BJ (cell line): ENCODE measurements at regions of chr15 and their contacts with region 1.

Region 1: DNA sequence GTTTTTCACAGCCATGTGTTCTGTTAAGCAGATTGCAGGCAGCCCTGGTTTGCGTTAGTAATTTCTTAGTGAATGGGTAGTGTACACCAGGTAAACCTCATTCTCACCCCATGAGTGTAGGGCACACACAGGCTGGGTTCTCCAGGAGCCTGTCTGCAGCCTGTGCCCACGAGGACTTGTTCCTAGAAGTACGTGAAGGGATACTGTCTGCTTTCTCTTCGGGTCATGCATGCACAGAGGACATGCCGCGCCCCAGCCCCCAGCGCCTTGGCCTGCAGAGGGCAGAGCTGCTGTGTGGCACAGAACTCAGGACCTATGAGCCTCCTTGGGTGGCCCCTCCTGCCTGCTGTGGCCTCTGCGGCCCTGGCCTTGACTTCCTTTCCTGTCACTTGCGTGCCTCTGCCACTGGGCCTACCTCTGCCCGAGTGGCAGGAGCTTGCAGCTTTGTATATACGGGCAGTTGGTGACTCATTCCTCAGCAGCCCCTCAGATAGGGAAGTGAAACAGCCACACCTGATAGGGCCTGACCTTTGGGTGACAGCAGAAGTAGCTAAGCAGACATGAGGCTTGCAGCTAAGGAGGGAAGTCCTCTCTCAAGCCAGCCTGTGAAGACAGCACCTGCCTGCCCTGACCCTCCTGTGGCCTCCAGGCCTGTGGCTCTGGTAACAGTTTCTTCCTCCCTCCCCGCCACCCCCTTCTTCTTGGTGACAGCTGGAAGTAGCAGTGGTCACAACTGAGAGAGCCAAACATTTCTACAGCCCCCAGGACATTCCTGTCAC is 19.5 kb downstream of the PPCDC start:
- DNase-seq: no peak
- H3K4me3 ChIP-seq: no peak overlapping the region
- H3K27me3 ChIP-seq: no peaks in the 10 kb centered on the region
- CTCF ChIP-seq: peak; percentile 50

Region 2: GRCh38 chr15:75029378-75030022 is 13.4 kb before region 1 on chr15:
- CTCF ChIA-PET with region 1: interaction called, 46 read pairs
- POLR2A ChIA-PET with region 1: interaction called, 3 read pairs
- DNase-seq: no peak
- H3K4me3 ChIP-seq: no peak overlapping the region
- H3K27me3 ChIP-seq: no peaks in the 10 kb centered on the region
- CTCF ChIP-seq: peak; percentile 88